ENCODE measurements at regions of chr13 and their contacts with region 1.

Region 1: DNA sequence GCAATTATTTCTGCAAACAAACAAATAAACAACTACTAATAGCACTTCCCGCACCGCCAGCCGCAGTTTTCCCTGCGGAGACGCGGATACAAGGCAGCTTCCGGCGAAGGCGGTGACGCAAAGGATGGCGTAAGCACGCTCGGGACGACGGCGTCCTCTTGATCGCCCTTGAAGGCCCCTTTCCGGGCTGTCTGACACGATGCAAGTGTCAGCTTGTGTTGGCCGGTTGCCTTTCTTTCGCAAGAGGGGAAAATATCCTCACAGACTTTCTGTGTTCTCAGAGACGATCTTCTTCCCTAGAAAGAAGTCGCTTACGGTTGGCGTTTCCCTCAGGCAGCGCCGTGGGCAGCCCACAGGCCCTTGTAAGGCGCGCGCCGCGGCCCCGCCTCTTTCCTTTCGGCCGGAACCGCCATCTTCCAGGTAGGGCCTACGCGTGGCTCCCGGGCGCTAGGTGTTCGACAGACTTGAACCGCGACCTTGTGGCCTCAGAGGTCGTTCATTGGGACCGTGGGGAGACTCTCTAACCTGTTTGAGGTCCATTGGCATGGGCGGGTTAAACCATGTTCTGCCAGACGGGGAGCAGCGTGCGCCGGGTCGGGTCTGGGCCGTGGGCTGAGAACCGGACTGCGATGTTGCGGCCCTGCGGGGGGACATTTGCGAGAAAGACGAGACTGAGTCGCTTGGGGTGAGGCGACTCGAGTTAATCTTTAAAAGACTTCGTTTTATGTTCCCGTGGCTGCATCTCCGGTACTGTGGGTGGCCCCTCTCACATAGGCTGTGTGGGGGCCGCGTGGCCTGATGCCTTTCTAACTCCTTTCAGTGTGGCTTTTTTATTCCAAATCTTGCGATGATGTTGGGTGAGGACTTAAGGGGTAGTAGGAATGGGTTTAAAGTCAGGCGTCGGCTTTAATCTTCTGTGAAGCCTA is at the start of gene RPL21:
- DNase-seq: peak; percentile 93 to 96
- H3K4me3 ChIP-seq: peak within 1 kb of the TSS; percentile 90
- H3K4me3 Mint-ChIP-seq: peak within 1 kb of the TSS; percentile 86
- H3K27ac Mint-ChIP-seq: peak within 1 kb of the TSS; percentile 99
- H3K4me1 ChIP-seq: peaks cover 16% of the 10 kb centered on the region; the same call in 1 of the 2 replicates
- H3K4me1 Mint-ChIP-seq: peaks cover 12% of the 10 kb centered on the region
- H3K27me3 ChIP-seq: no peaks in the 10 kb centered on the region
- H3K27me3 Mint-ChIP-seq: no peaks in the 10 kb centered on the region
- CTCF ChIP-seq: no peak
- total RNA-seq, gene RPL21: 1,158 and 1,201 TPM in 2 replicates

Region 2: DNA sequence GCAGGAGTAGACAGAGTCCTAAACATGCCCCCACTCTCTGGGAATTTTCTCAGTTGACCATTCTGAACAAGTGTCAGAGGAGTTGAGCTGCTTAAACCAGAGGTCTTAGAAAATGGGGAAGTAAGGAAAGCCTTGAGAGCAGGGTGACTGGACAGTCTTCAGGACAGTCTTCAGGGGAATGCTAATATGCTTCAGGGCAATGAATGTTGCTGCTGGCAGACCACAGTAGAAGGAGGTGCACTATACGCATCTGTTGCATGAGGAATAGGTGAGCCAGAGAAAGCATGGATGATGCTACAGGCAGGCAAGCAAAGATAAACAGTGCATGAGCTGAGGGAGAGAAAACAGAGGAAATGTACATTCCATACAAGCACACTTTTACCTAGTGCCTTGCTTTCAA is 294.2 kb before region 1 on chr13:
- CTCF ChIA-PET with region 1: no interaction called
- POLR2A ChIA-PET with region 1: interaction called, 9 read pairs
- intact Hi-C with region 1: loop called (anchors 2 kb)
- DNase-seq: peak; percentile 72 to 76
- H3K4me3 ChIP-seq: no peak overlapping the region
- H3K4me3 Mint-ChIP-seq: peak overlapping the region; percentile 38
- H3K27ac Mint-ChIP-seq: peak overlapping the region; percentile 90
- H3K4me1 ChIP-seq: peaks cover 91% of the 10 kb centered on the region
- H3K4me1 Mint-ChIP-seq: peaks cover 56% of the 10 kb centered on the region
- H3K27me3 ChIP-seq: no peaks in the 10 kb centered on the region
- H3K27me3 Mint-ChIP-seq: no peaks in the 10 kb centered on the region
- CTCF ChIP-seq: no peak

Region 3: GRCh38 chr13:27171827-27172494 is 79.5 kb before region 1 on chr13:
- CTCF ChIA-PET with region 1: no interaction called
- POLR2A ChIA-PET with region 1: no interaction called
- intact Hi-C with region 1: loop called (anchors 5 kb)
- DNase-seq: peak; percentile 93 to 95
- H3K4me3 ChIP-seq: peak overlapping the region; percentile 85
- H3K4me3 Mint-ChIP-seq: peak overlapping the region; percentile 95
- H3K27ac Mint-ChIP-seq: no peak overlapping the region
- H3K4me1 ChIP-seq: peaks cover 19% of the 10 kb centered on the region
- H3K4me1 Mint-ChIP-seq: peaks cover 27% of the 10 kb centered on the region
- H3K27me3 ChIP-seq: no peaks in the 10 kb centered on the region
- H3K27me3 Mint-ChIP-seq: no peaks in the 10 kb centered on the region
- CTCF ChIP-seq: no peak

Region 4: GRCh38 chr13:27270594-27271520 is 19.4 kb after region 1 on chr13 and contains the start of gene RASL11A:
- CTCF ChIA-PET with region 1: interaction called, 5 read pairs
- POLR2A ChIA-PET with region 1: interaction called, 7 read pairs
- intact Hi-C with region 1: loop called (anchors 2 kb)
- DNase-seq: peak; percentile 87 to 91
- H3K4me3 ChIP-seq: peak within 1 kb of the TSS; percentile 82
- H3K4me3 Mint-ChIP-seq: peak within 1 kb of the TSS; percentile 81
- H3K27ac Mint-ChIP-seq: peak within 1 kb of the TSS; percentile 74
- H3K4me1 ChIP-seq: peaks cover 4% of the 10 kb centered on the region; the same call in 1 of the 2 replicates
- H3K4me1 Mint-ChIP-seq: peaks cover 7% of the 10 kb centered on the region
- H3K27me3 ChIP-seq: no peaks in the 10 kb centered on the region
- H3K27me3 Mint-ChIP-seq: no peaks in the 10 kb centered on the region
- CTCF ChIP-seq: peak; percentile 79 to 97
- total RNA-seq, gene RASL11A: 18.8 and 21.0 TPM in 2 replicates

Region 5: GRCh38 chr13:27504128-27504867 is 252.9 kb after region 1 on chr13:
- CTCF ChIA-PET with region 1: no interaction called
- POLR2A ChIA-PET with region 1: no interaction called
- intact Hi-C with region 1: no loop called
- DNase-seq: no peak
- H3K4me3 ChIP-seq: no peak overlapping the region
- H3K4me3 Mint-ChIP-seq: no peak overlapping the region
- H3K27ac Mint-ChIP-seq: no peak overlapping the region
- H3K4me1 ChIP-seq: no peaks in the 10 kb centered on the region
- H3K4me1 Mint-ChIP-seq: no peaks in the 10 kb centered on the region
- H3K27me3 ChIP-seq: no peaks in the 10 kb centered on the region; the same call in 1 of the 2 replicates
- H3K27me3 Mint-ChIP-seq: peaks cover 3% of the 10 kb centered on the region
- CTCF ChIP-seq: no peak

Region 6: GRCh38 chr13:27765650-27766049 is 514.2 kb after region 1 on chr13:
- CTCF ChIA-PET with region 1: no interaction called
- POLR2A ChIA-PET with region 1: no interaction called
- intact Hi-C with region 1: no loop called
- DNase-seq: no peak
- H3K4me3 ChIP-seq: no peak overlapping the region
- H3K4me3 Mint-ChIP-seq: no peak overlapping the region
- H3K27ac Mint-ChIP-seq: no peak overlapping the region
- H3K4me1 ChIP-seq: no peaks in the 10 kb centered on the region
- H3K4me1 Mint-ChIP-seq: no peaks in the 10 kb centered on the region
- H3K27me3 ChIP-seq: no peaks in the 10 kb centered on the region
- H3K27me3 Mint-ChIP-seq: peaks cover 9% of the 10 kb centered on the region
- CTCF ChIP-seq: no peak

Measured in Caco-2 (cell line).